Activated naive CD4-positive, alpha-beta T cell treated with anti-CD3 and anti-CD28 coated beads for 36 hours (primary cell): ENCODE measurements at regions of chr14 and their contacts with region 1.

Region 1: DNA sequence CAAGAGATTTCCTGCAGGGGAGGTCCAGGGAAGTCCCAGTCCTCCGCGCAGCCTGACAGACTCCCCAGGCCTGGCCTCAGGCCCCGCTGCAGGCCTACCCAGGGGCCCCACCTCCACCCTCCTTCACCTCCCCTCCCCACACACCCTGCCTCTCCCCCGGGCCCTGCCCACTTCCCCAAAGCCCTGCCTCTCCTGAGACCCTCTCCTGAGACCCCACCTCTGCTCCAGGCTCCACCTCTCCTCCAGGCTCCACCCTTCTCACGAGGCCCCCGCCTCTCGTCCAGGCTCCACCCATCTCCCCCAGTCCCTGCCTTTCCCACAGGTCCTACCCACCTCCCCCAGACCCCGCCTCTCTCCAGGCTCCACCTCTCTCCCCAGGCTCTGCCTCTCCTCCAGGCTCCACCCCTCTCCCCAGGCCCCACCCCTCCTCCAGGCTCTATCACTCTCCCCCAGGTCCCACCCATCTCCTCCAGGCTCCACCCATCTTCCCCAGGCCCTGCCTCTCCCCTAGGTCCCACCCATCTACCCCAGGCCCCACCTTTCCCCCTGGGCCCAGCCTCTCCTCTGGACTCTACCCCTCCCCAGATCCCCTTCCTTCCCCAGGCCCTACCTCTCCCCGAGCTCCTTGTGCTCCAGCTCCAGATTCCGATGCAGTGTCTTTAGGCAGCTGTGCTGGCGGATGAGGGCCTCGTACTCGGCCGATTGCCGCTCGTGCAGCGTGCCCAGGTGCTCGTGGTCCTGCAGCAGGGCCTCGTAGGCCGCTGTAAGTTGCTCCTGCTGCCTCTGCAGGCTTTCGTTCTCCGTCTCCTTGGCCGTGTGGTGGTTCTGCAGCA is 58.8 kb upstream of the GPR68 start:
- DNase-seq: peak; percentile 89
- H3K4me3 Mint-ChIP-seq: no peak overlapping the region
- H3K27ac Mint-ChIP-seq: peak overlapping the region; percentile 93
- H3K4me1 Mint-ChIP-seq: peaks cover 58% of the 10 kb centered on the region
- H3K27me3 Mint-ChIP-seq: no peaks in the 10 kb centered on the region

Region 2: DNA sequence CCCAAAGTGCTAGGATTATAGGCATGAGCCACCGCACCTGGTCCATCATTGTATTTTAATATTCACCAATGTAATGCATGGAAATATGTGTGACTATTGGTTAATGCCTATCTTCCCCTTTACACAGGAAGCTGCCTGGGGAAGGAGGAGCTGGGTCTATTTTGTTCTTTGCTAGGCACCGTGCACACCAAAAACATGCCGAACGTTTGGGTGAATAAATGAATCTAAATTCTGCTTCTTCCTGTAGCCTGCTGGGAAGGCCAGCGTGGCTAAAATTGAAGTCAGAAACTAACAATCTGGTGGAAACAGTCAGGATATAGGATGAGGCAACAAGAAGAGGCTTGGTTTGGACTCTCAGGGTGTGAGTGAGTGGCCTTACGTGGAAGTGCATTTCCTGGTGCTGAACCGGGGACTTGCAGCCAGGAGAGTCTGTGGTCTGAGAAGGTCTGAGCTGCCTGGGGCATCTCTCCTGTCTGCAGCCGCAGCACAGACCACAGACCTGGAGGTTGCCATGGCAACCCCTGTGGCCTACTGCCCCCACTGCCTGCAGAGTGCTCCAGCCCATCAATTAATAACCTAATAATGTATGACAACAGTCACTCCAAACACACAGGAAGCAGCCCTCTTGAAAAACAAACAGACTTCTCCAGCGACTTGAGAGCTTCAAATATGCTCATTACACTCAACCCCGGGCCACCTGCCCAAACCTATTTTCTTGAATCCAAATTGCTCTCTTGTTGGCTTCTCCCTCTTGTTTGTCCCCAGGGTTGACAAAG is 53.3 kb before region 1 on chr14:
- CTCF ChIA-PET with region 1: no interaction called
- intact Hi-C with region 1: loop called (anchors 1 kb)
- DNase-seq: peak; percentile 42
- H3K4me3 Mint-ChIP-seq: no peak overlapping the region
- H3K27ac Mint-ChIP-seq: peak overlapping the region; percentile 70
- H3K4me1 Mint-ChIP-seq: peaks cover 81% of the 10 kb centered on the region
- H3K27me3 Mint-ChIP-seq: no peaks in the 10 kb centered on the region

Region 3: GRCh38 chr14:91317381-91318308 is 14.3 kb after region 1 on chr14:
- CTCF ChIA-PET with region 1: interaction called, 3 read pairs
- intact Hi-C with region 1: loop called (anchors 1 kb)
- DNase-seq: peak; percentile 87
- H3K4me3 Mint-ChIP-seq: peak overlapping the region; percentile 60
- H3K27ac Mint-ChIP-seq: peak overlapping the region; percentile 95
- H3K4me1 Mint-ChIP-seq: peaks cover 72% of the 10 kb centered on the region
- H3K27me3 Mint-ChIP-seq: no peaks in the 10 kb centered on the region

Region 4: GRCh38 chr14:91599994-91600393 is 296.7 kb after region 1 on chr14:
- CTCF ChIA-PET with region 1: no interaction called
- intact Hi-C with region 1: no loop called
- DNase-seq: no peak
- H3K4me3 Mint-ChIP-seq: no peak overlapping the region
- H3K27ac Mint-ChIP-seq: no peak overlapping the region
- H3K4me1 Mint-ChIP-seq: no peaks in the 10 kb centered on the region
- H3K27me3 Mint-ChIP-seq: no peaks in the 10 kb centered on the region

Region 5: GRCh38 chr14:92768795-92769194 is 1465.5 kb after region 1 on chr14:
- CTCF ChIA-PET with region 1: no interaction called
- intact Hi-C with region 1: no loop called
- DNase-seq: no peak
- H3K4me3 Mint-ChIP-seq: no peak overlapping the region
- H3K27ac Mint-ChIP-seq: no peak overlapping the region
- H3K4me1 Mint-ChIP-seq: peaks cover 16% of the 10 kb centered on the region
- H3K27me3 Mint-ChIP-seq: peaks cover 3% of the 10 kb centered on the region